ENCODE measurements at regions of chrX and their contacts with region 1.

Region 1: GRCh38 chrX:106959901-106960300 is 39.7 kb downstream of the CLDN2 start:
- DNase-seq: peak; percentile 59
- ATAC-seq: peak; percentile 93
- H3K4me3 ChIP-seq: no peak overlapping the region
- H3K27ac ChIP-seq: no peak overlapping the region
- H3K4me1 ChIP-seq: peaks cover 18% of the 10 kb centered on the region
- H3K27me3 ChIP-seq: no peaks in the 10 kb centered on the region
- CTCF ChIP-seq: peak; percentile 65
- EP300 ChIP-seq: no peak
- POLR2A ChIP-seq: no peak
- RAD21 ChIP-seq: peak; percentile 61; the same call in 1 of the 2 replicates

Region 2: GRCh38 chrX:106707771-106708454 is 252.0 kb before region 1 on chrX:
- CTCF ChIA-PET with region 1: no interaction called
- POLR2A ChIA-PET with region 1: no interaction called
- in situ Hi-C with region 1: no loop called
- intact Hi-C with region 1: no loop called
- DNase-seq: no peak
- ATAC-seq: no peak
- H3K4me3 ChIP-seq: no peak overlapping the region
- H3K27ac ChIP-seq: no peak overlapping the region
- H3K4me1 ChIP-seq: no peaks in the 10 kb centered on the region
- H3K27me3 ChIP-seq: no peaks in the 10 kb centered on the region
- CTCF ChIP-seq: no peak
- EP300 ChIP-seq: no peak
- POLR2A ChIP-seq: no peak
- RAD21 ChIP-seq: no peak

Region 3: GRCh38 chrX:106894392-106894909 is 65.5 kb before region 1 on chrX:
- CTCF ChIA-PET with region 1: interaction called, 25 read pairs
- POLR2A ChIA-PET with region 1: interaction called, 11 read pairs
- in situ Hi-C with region 1: no loop called
- intact Hi-C with region 1: loop called (anchors 1 kb)
- DNase-seq: peak; percentile 60
- ATAC-seq: peak; percentile 89
- H3K4me3 ChIP-seq: peak overlapping the region in 1 of 3 experiments; percentile 46; a peak in 2 of 6 replicates
- H3K27ac ChIP-seq: no peak overlapping the region
- H3K4me1 ChIP-seq: peaks cover 30% of the 10 kb centered on the region
- H3K27me3 ChIP-seq: no peaks in the 10 kb centered on the region
- CTCF ChIP-seq: peak; percentile 85
- EP300 ChIP-seq: no peak
- POLR2A ChIP-seq: no peak
- RAD21 ChIP-seq: peak; percentile 76

Region 4: DNA sequence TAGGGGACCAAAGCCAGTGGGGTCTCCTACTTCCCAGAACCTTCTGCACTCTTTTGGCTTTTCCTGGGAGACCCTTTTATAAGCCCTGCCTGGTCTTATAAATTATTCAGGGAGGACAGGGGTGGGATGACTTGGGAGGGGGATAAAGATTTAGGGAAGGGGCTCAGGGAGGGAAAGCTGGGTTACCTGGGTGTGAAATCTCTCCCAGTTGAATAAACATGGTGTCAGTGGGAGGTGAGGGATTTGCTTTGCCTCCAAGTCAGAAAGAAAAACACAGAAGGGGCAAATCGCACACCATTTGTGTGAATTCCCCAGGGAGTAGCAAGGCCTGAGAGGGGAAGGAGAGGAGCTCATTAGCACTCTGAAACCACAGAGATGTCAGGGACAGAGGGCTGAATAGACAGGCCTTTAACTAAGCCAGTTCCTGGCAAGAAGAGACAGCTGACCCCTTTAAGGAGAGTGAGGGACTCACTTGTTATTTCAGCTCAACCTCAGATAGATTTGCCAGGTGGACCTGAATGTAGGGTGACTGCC is 56.5 kb before region 1 on chrX and contains the start of gene RIPPLY1:
- CTCF ChIA-PET with region 1: interaction called, 15 read pairs
- POLR2A ChIA-PET with region 1: interaction called, 11 read pairs
- in situ Hi-C with region 1: loop called (anchors 5 kb)
- intact Hi-C with region 1: loop called (anchors 1 kb)
- DNase-seq: no peak
- ATAC-seq: no peak
- H3K4me3 ChIP-seq: peak within 1 kb of the TSS in 2 of 3 experiments; percentile 12 to 18; a peak in 1 of 6 replicates
- H3K27ac ChIP-seq: peak within 1 kb of the TSS; percentile 87
- H3K4me1 ChIP-seq: peaks cover 84% of the 10 kb centered on the region
- H3K27me3 ChIP-seq: no peaks in the 10 kb centered on the region
- CTCF ChIP-seq: no peak
- EP300 ChIP-seq: no peak
- POLR2A ChIP-seq: no peak
- RAD21 ChIP-seq: no peak
- total RNA-seq, gene RIPPLY1: 0.49 and 0.86 TPM in 2 replicates

Region 5: GRCh38 chrX:106933041-106933961 is 26.6 kb before region 1 on chrX:
- CTCF ChIA-PET with region 1: no interaction called
- POLR2A ChIA-PET with region 1: interaction called, 12 read pairs
- in situ Hi-C with region 1: no loop called
- intact Hi-C with region 1: loop called (anchors 2 kb)
- DNase-seq: peak; percentile 89
- ATAC-seq: peak; percentile 77
- H3K4me3 ChIP-seq: peak overlapping the region; percentile 19 to 58 (median 45); a peak in 5 of 6 replicates
- H3K27ac ChIP-seq: peak overlapping the region; percentile 90
- H3K4me1 ChIP-seq: peaks cover 50% of the 10 kb centered on the region
- H3K27me3 ChIP-seq: no peaks in the 10 kb centered on the region
- CTCF ChIP-seq: no peak
- EP300 ChIP-seq: peak in 1 of 2 experiments; percentile 82; a peak in 1 of 4 replicates
- POLR2A ChIP-seq: peak in 1 of 2 experiments; percentile 6; a peak in 1 of 4 replicates
- RAD21 ChIP-seq: no peak

Region 6: GRCh38 chrX:106987488-106987887 is 27.6 kb after region 1 on chrX:
- CTCF ChIA-PET with region 1: no interaction called
- POLR2A ChIA-PET with region 1: no interaction called
- in situ Hi-C with region 1: no loop called
- intact Hi-C with region 1: no loop called
- DNase-seq: no peak
- ATAC-seq: no peak
- H3K4me3 ChIP-seq: no peak overlapping the region
- H3K27ac ChIP-seq: no peak overlapping the region
- H3K4me1 ChIP-seq: no peaks in the 10 kb centered on the region
- H3K27me3 ChIP-seq: no peaks in the 10 kb centered on the region
- CTCF ChIP-seq: no peak
- EP300 ChIP-seq: no peak
- POLR2A ChIP-seq: no peak
- RAD21 ChIP-seq: no peak

Region 7: DNA sequence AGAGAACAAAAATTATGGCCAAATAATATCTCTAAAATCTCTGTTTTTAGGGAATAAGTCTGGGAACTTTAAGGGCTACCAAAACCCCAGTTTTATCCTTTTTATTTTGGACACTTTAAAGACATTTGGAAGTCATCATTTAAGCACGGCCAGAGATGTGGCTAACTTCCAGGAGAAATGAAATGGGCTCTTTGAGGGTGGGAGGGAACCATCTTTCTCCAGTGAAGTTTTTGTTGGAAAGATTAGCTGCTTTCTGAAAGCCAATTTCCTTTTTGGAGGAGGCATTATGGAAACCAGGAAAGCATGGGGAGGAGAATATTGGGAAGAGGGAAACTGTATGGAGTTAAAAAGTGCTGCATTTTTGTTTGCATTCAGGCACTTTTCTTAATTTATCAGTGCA is 1089.7 kb after region 1 on chrX:
- CTCF ChIA-PET with region 1: no interaction called
- POLR2A ChIA-PET with region 1: no interaction called
- in situ Hi-C with region 1: no loop called
- intact Hi-C with region 1: no loop called
- DNase-seq: no peak
- ATAC-seq: no peak
- H3K4me3 ChIP-seq: no peak overlapping the region
- H3K27ac ChIP-seq: no peak overlapping the region
- H3K4me1 ChIP-seq: no peaks in the 10 kb centered on the region
- H3K27me3 ChIP-seq: no peaks in the 10 kb centered on the region
- CTCF ChIP-seq: no peak
- EP300 ChIP-seq: no peak
- POLR2A ChIP-seq: no peak
- RAD21 ChIP-seq: no peak